ENCODE measurements at regions of chr16 and their contacts with region 1.

Region 1: DNA sequence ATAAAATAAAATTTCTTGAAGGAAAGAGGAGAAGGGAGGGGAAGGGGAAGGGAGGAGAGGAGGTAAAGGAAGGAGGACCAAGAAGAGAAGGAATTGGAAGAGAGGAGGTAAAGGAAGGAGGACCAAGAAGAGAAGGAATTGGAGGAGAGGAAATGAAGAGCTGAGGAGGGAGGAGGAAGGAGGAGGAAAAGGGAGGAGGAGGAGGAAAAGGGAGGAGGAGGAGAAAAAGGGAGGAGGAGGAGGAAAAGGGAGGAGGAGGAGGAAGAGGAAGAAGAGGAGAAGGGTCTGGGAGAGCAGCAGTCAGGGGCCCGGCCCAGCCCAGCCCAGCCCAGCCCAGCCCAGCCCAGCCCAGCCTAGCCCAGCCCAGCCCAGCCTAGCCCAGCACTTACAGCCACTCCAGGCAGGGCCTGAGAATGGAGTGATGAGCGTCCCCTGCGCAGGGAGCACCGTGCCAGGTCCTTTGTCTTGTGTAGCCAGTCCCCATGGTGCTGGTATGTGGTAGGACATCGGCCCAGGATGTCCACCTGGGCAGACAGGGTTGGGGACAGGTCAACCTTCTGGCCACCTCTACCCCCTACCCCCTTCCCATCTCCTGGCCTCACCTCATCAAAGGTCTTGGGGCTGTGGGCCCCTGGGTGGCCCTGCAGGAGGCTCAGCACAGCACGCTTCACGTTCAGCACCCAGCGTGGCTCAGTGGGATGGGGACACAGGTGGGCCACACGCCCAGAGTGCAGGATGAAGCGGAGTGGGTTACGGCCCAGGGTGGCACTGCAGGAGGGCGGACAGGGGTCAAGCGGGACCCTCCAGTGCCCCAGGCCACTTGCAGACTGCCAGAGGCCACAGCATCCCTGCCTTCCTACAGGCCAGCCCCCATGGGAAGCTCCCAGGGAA is 70.9 kb downstream of the LITAF start:
- DNase-seq: no peak
- ATAC-seq: no peak
- H3K4me3 ChIP-seq: no peak overlapping the region
- H3K4me3 Mint-ChIP-seq: no peak overlapping the region
- H3K27ac ChIP-seq: no peak overlapping the region
- H3K27ac Mint-ChIP-seq: no peak overlapping the region
- H3K4me1 ChIP-seq: peaks cover 0 to 8% of the 10 kb centered on the region in 2 donors
- H3K4me1 Mint-ChIP-seq: peaks cover 8% of the 10 kb centered on the region
- H3K27me3 ChIP-seq: no peaks in the 10 kb centered on the region
- H3K27me3 Mint-ChIP-seq: no peaks in the 10 kb centered on the region
- CTCF ChIP-seq: no peak

Region 2: DNA sequence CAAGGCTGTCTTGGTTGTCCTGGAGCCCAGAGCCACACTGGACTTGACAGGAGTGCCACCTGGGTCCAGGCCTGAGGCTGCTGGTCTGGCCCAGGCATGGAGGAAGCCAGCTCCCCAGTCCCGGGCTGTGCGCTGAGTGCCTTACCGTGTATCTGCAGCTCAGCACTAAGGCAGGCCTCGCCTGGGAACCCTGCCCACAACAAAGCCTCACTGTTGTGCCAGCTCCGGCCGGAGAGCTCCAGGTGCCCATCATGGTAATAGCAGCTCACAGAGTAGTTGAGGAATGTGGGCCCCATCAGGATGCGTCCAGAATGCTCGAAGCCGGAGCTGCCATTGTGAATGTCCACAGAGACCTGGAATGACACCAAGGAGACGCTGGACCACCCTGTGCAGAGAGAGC is 98.3 kb before region 1 on chr16:
- CTCF ChIA-PET with region 1: no interaction called
- POLR2A ChIA-PET with region 1: no interaction called
- intact Hi-C with region 1: no loop called
- DNase-seq: no peak
- ATAC-seq: no peak
- H3K4me3 ChIP-seq: no peak overlapping the region
- H3K4me3 Mint-ChIP-seq: no peak overlapping the region
- H3K27ac ChIP-seq: no peak overlapping the region
- H3K27ac Mint-ChIP-seq: no peak overlapping the region
- H3K4me1 ChIP-seq: no peaks in the 10 kb centered on the region
- H3K4me1 Mint-ChIP-seq: peaks cover under 1% of the 10 kb centered on the region
- H3K27me3 ChIP-seq: peaks cover 0 to 2% (median 0%) of the 10 kb centered on the region in 4 experiments
- H3K27me3 Mint-ChIP-seq: no peaks in the 10 kb centered on the region
- CTCF ChIP-seq: no peak

Region 3: GRCh38 chr16:11470676-11471415 is 44.9 kb before region 1 on chr16:
- CTCF ChIA-PET with region 1: no interaction called
- POLR2A ChIA-PET with region 1: no interaction called
- intact Hi-C with region 1: no loop called
- DNase-seq: no peak
- ATAC-seq: no peak
- H3K4me3 ChIP-seq: no peak overlapping the region
- H3K4me3 Mint-ChIP-seq: no peak overlapping the region
- H3K27ac ChIP-seq: no peak overlapping the region
- H3K27ac Mint-ChIP-seq: no peak overlapping the region
- H3K4me1 ChIP-seq: no peaks in the 10 kb centered on the region
- H3K4me1 Mint-ChIP-seq: no peaks in the 10 kb centered on the region
- H3K27me3 ChIP-seq: no peaks in the 10 kb centered on the region
- H3K27me3 Mint-ChIP-seq: no peaks in the 10 kb centered on the region
- CTCF ChIP-seq: no peak

Region 4: GRCh38 chr16:11526655-11527350 is 11.0 kb after region 1 on chr16:
- CTCF ChIA-PET with region 1: interaction called, 27 read pairs
- POLR2A ChIA-PET with region 1: no interaction called
- intact Hi-C with region 1: no loop called
- DNase-seq: no peak
- ATAC-seq: no peak
- H3K4me3 ChIP-seq: no peak overlapping the region
- H3K4me3 Mint-ChIP-seq: no peak overlapping the region
- H3K27ac ChIP-seq: no peak overlapping the region
- H3K27ac Mint-ChIP-seq: no peak overlapping the region
- H3K4me1 ChIP-seq: no peaks in the 10 kb centered on the region
- H3K4me1 Mint-ChIP-seq: peaks cover 3% of the 10 kb centered on the region
- H3K27me3 ChIP-seq: peaks cover 0 to 4% (median 0%) of the 10 kb centered on the region in 4 experiments
- H3K27me3 Mint-ChIP-seq: peaks cover 8% of the 10 kb centered on the region
- CTCF ChIP-seq: no peak

Measured in B cell (primary cell).